A673 (cell line): ENCODE measurements at regions of chr6 and their contacts with region 1.

Region 1: GRCh38 chr6:7243179-7243981 is 69.6 kb downstream of the SSR1 start:
- DNase-seq: peak; percentile 84
- H3K4me3 ChIP-seq: no peak overlapping the region
- H3K27ac ChIP-seq: peak overlapping the region; percentile 74
- H3K4me1 ChIP-seq: peaks cover 41% of the 10 kb centered on the region
- H3K27me3 ChIP-seq: no peaks in the 10 kb centered on the region
- CTCF ChIP-seq: peak; percentile 87

Region 2: GRCh38 chr6:6556738-6557505 is 686.5 kb before region 1 on chr6:
- CTCF ChIA-PET with region 1: no interaction called
- POLR2A ChIA-PET with region 1: no interaction called
- intact Hi-C with region 1: loop called (anchors 5 kb)
- DNase-seq: peak; percentile 74
- H3K4me3 ChIP-seq: no peak overlapping the region
- H3K27ac ChIP-seq: peak overlapping the region; percentile 48
- H3K4me1 ChIP-seq: peaks cover 8% of the 10 kb centered on the region
- H3K27me3 ChIP-seq: no peaks in the 10 kb centered on the region
- CTCF ChIP-seq: peak; percentile 97

Region 3: DNA sequence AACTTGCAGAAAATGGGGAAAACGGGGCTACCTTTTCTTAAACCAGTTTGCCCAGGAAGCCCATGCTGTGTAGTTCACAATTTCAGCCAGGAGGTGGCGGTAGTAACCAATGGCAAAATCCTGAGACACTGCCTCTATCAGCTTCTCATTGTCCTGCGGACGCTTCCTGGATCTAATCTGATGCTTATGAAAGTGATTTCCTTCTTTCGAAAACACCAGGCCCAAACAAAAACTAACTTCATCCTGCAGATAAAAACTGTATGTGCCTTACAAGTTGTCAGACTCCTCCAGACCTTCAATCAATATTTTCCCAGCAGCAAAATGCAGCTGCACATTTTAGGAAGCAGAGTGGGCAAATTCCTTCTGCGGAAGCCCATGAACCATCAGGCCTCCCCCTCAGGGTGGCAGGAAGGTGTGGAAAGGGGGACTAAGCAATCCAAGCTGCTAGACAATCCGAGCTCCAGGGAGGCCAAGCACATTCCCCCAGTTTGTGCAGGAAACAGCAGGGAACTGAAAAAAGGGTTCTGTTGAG is 566.4 kb before region 1 on chr6:
- CTCF ChIA-PET with region 1: no interaction called
- POLR2A ChIA-PET with region 1: no interaction called
- intact Hi-C with region 1: loop called (anchors 2 kb)
- DNase-seq: peak; percentile 91
- H3K4me3 ChIP-seq: no peak overlapping the region
- H3K27ac ChIP-seq: peak overlapping the region; percentile 55
- H3K4me1 ChIP-seq: peaks cover 30% of the 10 kb centered on the region
- H3K27me3 ChIP-seq: no peaks in the 10 kb centered on the region
- CTCF ChIP-seq: peak; percentile 99

Region 4: GRCh38 chr6:6724539-6725467 is 518.6 kb before region 1 on chr6:
- CTCF ChIA-PET with region 1: interaction called, 4 read pairs
- POLR2A ChIA-PET with region 1: no interaction called
- intact Hi-C with region 1: loop called (anchors 2 kb)
- DNase-seq: peak; percentile 94
- H3K4me3 ChIP-seq: peak overlapping the region; percentile 29
- H3K27ac ChIP-seq: peak overlapping the region; percentile 87
- H3K4me1 ChIP-seq: peaks cover 54% of the 10 kb centered on the region
- H3K27me3 ChIP-seq: no peaks in the 10 kb centered on the region
- CTCF ChIP-seq: peak; percentile 90

Region 5: GRCh38 chr6:6840831-6841291 is 402.5 kb before region 1 on chr6:
- CTCF ChIA-PET with region 1: interaction called, 3 read pairs
- POLR2A ChIA-PET with region 1: no interaction called
- intact Hi-C with region 1: loop called (anchors 2 kb)
- DNase-seq: no peak
- H3K4me3 ChIP-seq: no peak overlapping the region
- H3K27ac ChIP-seq: peak overlapping the region; percentile 47
- H3K4me1 ChIP-seq: peaks cover 41% of the 10 kb centered on the region
- H3K27me3 ChIP-seq: no peaks in the 10 kb centered on the region
- CTCF ChIP-seq: no peak

Region 6: DNA sequence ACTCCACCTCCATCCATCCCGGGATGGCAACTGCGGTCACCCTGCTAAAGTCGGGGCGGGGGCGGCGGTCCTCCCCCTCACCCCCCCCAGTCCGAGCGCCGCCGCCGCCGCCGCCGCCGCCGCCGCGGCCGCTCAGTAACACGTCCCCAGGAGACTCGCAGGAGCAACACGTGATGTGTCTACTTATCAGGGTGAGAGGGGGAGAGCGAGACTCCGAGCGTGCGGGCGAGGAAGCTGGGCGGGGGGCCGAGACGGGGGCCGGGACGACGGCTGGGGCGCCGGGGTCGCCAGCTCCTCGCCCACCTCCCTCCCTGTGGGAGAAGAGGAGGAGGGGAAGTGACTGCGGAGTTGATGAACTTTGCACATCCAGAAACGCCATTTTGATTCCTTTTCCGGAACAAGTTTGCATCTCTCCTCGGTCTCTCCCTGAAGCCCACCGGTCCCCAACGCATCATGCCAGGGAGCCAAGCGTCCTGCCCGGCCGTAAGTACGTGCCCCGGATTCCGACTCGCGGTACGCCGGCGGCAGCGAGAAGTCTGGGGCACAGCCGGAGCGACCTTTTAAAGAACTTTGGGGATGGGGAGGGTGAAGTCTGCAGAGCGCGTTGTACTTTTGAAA is 135.7 kb before region 1 on chr6 and contains the start of gene RREB1:
- CTCF ChIA-PET with region 1: no interaction called
- POLR2A ChIA-PET with region 1: no interaction called
- intact Hi-C with region 1: loop called (anchors 5 kb)
- DNase-seq: peak; percentile 80
- H3K4me3 ChIP-seq: peak within 1 kb of the TSS; percentile 78
- H3K27ac ChIP-seq: peak within 1 kb of the TSS; percentile 67
- H3K4me1 ChIP-seq: peaks cover 32% of the 10 kb centered on the region
- H3K27me3 ChIP-seq: no peaks in the 10 kb centered on the region
- CTCF ChIP-seq: no peak
- total RNA-seq, gene RREB1: 55.5 and 61.6 TPM in 2 replicates

Region 7: GRCh38 chr6:7188492-7188891 is 54.9 kb before region 1 on chr6:
- CTCF ChIA-PET with region 1: no interaction called
- POLR2A ChIA-PET with region 1: no interaction called
- intact Hi-C with region 1: no loop called
- DNase-seq: no peak
- H3K4me3 ChIP-seq: no peak overlapping the region
- H3K27ac ChIP-seq: no peak overlapping the region
- H3K4me1 ChIP-seq: no peaks in the 10 kb centered on the region
- H3K27me3 ChIP-seq: no peaks in the 10 kb centered on the region
- CTCF ChIP-seq: no peak

Region 8: GRCh38 chr6:7228662-7229375 is 14.6 kb before region 1 on chr6:
- CTCF ChIA-PET with region 1: interaction called, 10 read pairs
- POLR2A ChIA-PET with region 1: no interaction called
- intact Hi-C with region 1: no loop called
- DNase-seq: no peak
- H3K4me3 ChIP-seq: no peak overlapping the region
- H3K27ac ChIP-seq: no peak overlapping the region
- H3K4me1 ChIP-seq: no peaks in the 10 kb centered on the region
- H3K27me3 ChIP-seq: no peaks in the 10 kb centered on the region
- CTCF ChIP-seq: no peak